ENCODE measurements at regions of chr19 and their contacts with region 1.

Region 1: GRCh38 chr19:54168174-54168917 is 4.6 kb downstream of the TMC4 start:
- DNase-seq: peak; percentile 97
- H3K4me3 ChIP-seq: peak overlapping the region in 1 of 4 donors; percentile 7
- H3K27ac ChIP-seq: no peak overlapping the region
- H3K4me1 ChIP-seq: peaks cover 12 to 28% (median 18%) of the 10 kb centered on the region in 4 donors
- H3K27me3 ChIP-seq: peaks cover 0 to 58% (median 13%) of the 10 kb centered on the region in 4 donors
- CTCF ChIP-seq: peak; percentile 79 to 89 (median 81)
- EP300 ChIP-seq: no peak
- POLR2A ChIP-seq: no peak

Region 2: DNA sequence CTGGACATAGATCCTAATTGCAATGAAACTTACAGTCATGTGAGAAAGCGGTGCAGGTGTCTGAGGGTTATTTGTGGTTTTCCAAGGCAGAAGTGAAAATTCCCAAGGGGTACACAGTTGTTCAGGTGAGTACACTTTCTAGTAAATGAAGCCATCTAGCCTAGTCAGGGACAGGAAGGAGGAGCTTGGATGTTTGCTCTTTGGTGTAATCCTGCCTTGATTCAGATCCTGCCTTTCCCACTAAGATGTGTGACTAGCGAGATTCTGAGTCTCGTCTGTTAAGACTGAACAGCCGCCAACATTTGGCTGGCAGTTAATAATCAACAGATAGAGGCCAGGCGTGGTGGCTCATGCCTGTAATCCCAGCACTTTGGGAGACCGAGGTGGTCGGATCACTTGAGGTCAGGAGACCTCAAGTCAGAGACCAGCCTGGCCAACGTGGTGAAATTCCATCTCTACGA is 34.8 kb after region 1 on chr19:
- intact Hi-C with region 1: loop called (anchors 5 kb)
- DNase-seq: no peak
- H3K4me3 ChIP-seq: no peak overlapping the region
- H3K27ac ChIP-seq: no peak overlapping the region
- H3K4me1 ChIP-seq: peaks cover 57 to 78% (median 74%) of the 10 kb centered on the region in 4 donors
- H3K27me3 ChIP-seq: no peaks in the 10 kb centered on the region
- CTCF ChIP-seq: no peak
- EP300 ChIP-seq: no peak
- POLR2A ChIP-seq: no peak

Region 3: DNA sequence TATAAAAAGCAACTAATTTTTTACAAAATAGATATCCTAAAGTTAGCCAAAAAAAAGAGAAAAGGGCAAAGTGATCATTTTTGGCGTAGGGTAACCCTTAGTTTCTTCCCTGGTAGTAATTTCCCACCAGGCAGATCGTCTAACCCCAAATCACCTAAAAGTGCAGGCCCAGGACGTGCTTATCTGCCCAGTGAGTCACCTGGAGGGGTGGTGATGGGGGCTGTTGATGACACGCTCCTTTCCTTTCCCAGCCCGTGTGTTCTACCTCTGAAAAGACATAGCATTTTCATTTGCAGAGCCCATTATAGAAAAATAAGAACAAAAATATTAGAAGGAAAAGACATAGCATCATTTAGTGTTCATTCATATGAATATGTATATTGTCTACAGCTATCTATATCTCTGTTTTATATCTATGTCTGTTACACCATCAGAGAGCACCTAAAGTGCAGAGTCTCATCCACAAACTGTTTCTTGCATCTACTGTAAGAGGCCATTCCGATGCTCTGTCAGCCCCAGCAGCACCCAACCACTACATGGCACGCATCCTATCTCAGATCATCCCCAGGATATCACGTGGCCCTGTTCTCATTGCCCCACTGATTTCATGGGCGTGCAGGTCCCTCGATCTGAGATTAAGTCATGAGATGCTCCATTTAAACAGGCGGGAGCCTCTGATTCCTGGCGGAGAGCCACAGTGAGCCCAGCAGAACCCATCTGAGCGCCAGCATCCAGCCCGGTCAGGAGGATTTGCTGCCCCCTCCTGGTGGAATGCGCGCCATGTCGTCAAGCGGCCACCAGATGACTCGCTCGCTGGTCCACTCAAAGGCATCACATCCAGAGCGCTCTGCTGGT is 63.0 kb after region 1 on chr19:
- intact Hi-C with region 1: loop called (anchors 2 kb)
- DNase-seq: peak; percentile 95
- H3K4me3 ChIP-seq: no peak overlapping the region
- H3K27ac ChIP-seq: no peak overlapping the region
- H3K4me1 ChIP-seq: peaks cover 0 to 9% (median 3%) of the 10 kb centered on the region in 4 donors
- H3K27me3 ChIP-seq: peaks cover 0 to 41% (median 2%) of the 10 kb centered on the region in 4 donors
- CTCF ChIP-seq: peak; percentile 84 to 89 (median 86)
- EP300 ChIP-seq: no peak
- POLR2A ChIP-seq: peak; percentile 7

Region 4: DNA sequence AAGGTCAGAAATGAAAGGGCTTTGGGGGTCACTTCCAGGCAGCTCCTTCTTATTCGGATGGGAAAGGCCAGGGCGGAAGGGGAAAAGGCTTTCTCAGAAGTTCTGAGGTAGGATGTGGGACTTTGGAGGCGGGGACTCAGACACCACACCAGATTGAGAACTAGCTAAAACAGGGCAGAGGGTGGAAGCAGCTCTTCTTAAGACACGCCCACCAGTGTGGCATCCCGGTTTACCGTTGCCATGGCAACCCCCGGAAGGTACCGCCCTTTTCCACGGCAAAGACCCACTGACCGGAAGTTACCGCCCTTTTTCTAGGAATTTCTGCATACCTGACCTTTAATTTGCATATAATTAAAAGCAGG is 148.4 kb after region 1 on chr19:
- intact Hi-C with region 1: no loop called
- DNase-seq: no peak
- H3K4me3 ChIP-seq: no peak overlapping the region
- H3K27ac ChIP-seq: no peak overlapping the region
- H3K4me1 ChIP-seq: no peaks in the 10 kb centered on the region
- H3K27me3 ChIP-seq: peaks cover 0 to 73% (median 5%) of the 10 kb centered on the region in 4 donors
- CTCF ChIP-seq: no peak
- EP300 ChIP-seq: no peak
- POLR2A ChIP-seq: no peak

Measured in esophagus muscularis mucosa (tissue), 4 donors.